Activated T-helper 1 cell treated with anti-CD3 and anti-CD28 coated beads, Interleukin-12 subunit alpha, Interleukin-12 subunit beta, Interleukin-2, Interleukin-4 antibody, amounts not matched to agents 30 ng/mL and 10 ng/mL and 1 ng/mL, durations not matched to agents 14 hours and 24 hours and 36 hours (primary cell): ENCODE measurements at regions of chr11 and their contacts with region 1.

Region 1: DNA sequence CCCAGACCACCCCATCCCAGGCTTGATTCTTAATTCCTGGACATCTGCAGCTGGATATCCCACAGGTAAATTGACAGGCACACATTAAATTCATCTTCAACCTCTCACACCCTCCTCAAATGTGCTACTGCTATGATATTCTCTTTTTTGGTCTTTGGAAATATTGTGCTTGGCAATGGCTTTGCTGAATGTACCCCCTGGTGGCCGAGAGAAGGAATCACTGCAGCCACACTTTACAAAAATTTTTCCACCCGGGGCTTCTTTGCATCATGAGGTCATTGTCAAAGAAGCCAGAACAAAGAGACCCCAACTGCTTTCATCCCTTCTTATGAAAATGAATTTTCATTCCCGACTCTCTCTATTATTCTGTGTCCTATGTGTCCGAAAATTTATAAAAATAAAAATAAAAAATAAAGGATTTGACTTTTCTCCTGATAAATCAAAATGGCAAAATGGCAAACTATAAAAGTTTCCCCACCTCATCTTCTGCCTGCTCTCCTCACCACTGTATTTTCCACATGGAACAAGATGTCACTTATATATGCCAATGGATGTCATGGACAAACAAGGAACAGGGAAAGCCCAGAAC is 15.0 kb upstream of the CYB5R2 start:
- DNase-seq: no peak
- H3K4me3 Mint-ChIP-seq: no peak overlapping the region
- H3K27ac Mint-ChIP-seq: no peak overlapping the region
- H3K4me1 Mint-ChIP-seq: no peaks in the 10 kb centered on the region
- H3K27me3 Mint-ChIP-seq: peaks cover 23% of the 10 kb centered on the region

Region 2: DNA sequence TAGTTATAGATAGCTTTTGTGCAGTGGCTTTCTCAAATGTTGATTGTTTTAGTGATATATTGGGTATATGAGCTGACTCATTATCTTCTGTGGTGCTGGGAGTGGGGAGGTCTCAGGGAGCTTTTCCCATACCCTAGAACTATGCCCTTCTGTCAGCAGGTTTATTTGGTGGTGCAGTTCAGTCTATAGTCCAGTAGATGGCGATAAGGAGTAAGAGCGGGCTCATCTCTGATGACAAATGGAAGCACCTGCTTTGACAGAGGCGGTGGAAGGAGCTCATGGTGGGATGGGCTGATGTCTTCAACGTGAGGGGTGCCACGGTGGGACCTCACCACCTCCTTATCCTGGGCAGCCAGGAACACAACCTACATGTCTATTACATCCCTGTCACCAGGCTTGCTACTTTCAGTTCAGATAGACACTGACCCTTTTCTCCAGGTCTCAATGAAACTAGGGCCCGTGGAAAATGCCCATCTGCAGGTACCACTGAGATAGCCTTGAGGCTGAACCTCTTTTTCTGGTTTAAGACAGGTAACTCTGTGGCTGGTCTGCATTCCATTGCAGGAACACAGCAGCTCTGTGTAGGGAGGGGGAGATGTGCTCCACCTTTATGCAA is 875.8 kb before region 1 on chr11:
- intact Hi-C with region 1: loop called (anchors 5 kb)
- DNase-seq: peak; percentile 15
- H3K4me3 Mint-ChIP-seq: no peak overlapping the region
- H3K27ac Mint-ChIP-seq: no peak overlapping the region
- H3K4me1 Mint-ChIP-seq: no peaks in the 10 kb centered on the region
- H3K27me3 Mint-ChIP-seq: peaks cover 19% of the 10 kb centered on the region

Region 3: DNA sequence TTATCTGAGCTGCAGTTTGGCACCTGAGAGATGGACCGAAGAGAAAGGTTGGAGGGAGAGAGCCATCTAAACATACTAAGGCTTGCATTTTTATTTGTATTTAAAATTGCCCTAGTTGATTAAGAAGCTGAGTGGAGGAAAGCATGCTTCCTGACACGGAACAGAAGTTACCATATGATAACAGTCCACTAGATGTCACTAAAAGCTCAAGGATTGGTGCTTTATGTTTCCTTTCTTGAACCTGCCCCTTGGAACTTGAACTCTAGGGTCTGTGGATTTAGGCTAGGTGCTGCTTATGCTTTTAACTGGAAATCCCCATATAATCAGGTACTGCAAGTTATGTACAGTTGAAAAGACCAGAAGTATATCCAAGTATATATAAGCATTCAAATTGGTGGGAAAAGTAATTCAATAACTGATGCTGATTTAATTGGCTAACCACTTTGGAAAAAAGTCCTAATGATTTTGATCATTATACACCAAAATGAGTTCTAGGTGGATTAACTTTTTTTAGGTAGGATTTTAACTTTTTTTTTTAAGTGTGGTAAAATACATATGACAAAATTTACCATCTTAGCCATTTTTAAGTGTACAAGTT is 590.0 kb before region 1 on chr11:
- intact Hi-C with region 1: loop called (anchors 1 kb)
- DNase-seq: no peak
- H3K4me3 Mint-ChIP-seq: no peak overlapping the region
- H3K27ac Mint-ChIP-seq: no peak overlapping the region
- H3K4me1 Mint-ChIP-seq: no peaks in the 10 kb centered on the region
- H3K27me3 Mint-ChIP-seq: peaks cover 16% of the 10 kb centered on the region

Region 4: GRCh38 chr11:7353100-7353499 is 335.2 kb before region 1 on chr11:
- intact Hi-C with region 1: loop called (anchors 10 kb)
- DNase-seq: no peak
- H3K4me3 Mint-ChIP-seq: no peak overlapping the region
- H3K27ac Mint-ChIP-seq: no peak overlapping the region
- H3K4me1 Mint-ChIP-seq: no peaks in the 10 kb centered on the region
- H3K27me3 Mint-ChIP-seq: no peaks in the 10 kb centered on the region

Region 5: DNA sequence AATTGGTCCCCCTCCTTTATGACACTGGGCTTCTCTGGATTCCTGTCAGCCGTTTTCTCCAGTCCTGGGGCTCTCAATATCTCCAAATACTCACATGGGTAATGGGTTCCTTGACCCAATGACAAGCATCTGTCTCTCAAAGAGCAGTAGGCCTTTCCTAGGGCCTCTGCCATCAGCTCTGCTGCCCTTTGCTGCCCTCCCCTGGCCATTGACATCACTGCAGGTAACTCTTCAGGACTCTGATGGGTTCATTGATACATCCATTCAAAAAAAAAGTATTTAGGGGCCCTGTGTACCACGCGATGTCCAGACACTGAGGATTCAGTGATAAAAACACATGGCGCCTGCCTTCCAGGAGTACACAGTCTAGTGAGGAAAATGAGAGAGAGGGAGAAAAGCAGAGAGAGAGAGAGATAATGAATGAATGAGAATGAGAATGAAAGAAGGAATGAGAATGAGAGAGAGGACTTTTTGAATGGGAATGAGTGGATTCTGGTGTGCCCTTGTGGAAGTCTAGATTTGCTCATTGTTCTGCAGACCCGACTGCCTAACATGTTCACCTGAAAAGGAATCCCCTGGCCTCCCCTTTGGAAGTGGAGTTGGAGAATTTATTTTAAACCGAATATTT is 245.6 kb before region 1 on chr11:
- intact Hi-C with region 1: loop called (anchors 10 kb)
- DNase-seq: peak; percentile 40
- H3K4me3 Mint-ChIP-seq: no peak overlapping the region
- H3K27ac Mint-ChIP-seq: no peak overlapping the region
- H3K4me1 Mint-ChIP-seq: no peaks in the 10 kb centered on the region
- H3K27me3 Mint-ChIP-seq: no peaks in the 10 kb centered on the region

Region 6: DNA sequence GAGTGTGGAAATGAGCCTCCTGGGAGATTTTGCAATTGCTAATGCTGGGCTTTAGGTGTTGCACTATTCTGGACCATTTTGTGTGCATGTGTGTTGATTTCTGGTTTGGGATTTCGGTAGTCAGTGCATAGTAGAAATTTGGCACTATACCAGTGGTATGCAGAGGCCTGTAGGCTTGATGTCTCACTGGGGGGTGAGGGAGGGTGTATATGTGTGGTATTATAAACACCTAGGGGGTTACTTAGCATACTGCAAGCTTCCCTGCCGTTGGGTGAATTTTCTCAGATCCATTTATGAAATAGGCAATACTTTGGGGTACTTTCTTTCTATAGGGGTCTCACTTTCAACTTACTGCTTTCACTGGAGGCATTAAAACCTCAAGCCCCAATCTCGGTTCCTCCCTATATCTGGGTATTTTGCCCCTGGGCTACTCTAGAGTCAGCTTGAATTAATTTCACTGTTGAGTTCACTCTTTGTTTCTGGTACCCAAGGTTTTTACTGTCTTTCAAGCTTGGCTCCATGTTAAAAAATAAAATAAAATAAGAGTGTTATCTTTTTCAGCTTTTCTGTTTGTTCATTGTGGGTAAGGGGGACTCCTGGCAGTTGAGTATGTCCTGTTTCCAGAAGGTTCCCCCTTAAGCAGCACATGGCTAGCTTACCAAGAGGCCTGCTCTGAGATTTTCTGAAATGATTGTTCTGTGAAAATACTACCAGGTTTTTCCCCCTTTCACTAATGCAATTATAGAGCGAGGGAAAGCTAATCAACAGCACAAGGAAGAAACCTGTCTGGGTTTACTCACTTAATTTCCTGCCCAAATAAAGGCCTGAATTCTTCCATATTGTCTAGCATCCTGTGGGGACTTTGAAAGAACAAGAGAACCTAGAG is 128.7 kb before region 1 on chr11:
- intact Hi-C with region 1: no loop called
- DNase-seq: no peak
- H3K4me3 Mint-ChIP-seq: no peak overlapping the region
- H3K27ac Mint-ChIP-seq: no peak overlapping the region
- H3K4me1 Mint-ChIP-seq: no peaks in the 10 kb centered on the region
- H3K27me3 Mint-ChIP-seq: peaks cover 4% of the 10 kb centered on the region

Region 7: GRCh38 chr11:7577291-7578190 is 110.8 kb before region 1 on chr11:
- intact Hi-C with region 1: loop called (anchors 5 kb)
- DNase-seq: no peak
- H3K4me3 Mint-ChIP-seq: peak overlapping the region; percentile 22
- H3K27ac Mint-ChIP-seq: peak overlapping the region; percentile 31
- H3K4me1 Mint-ChIP-seq: peaks cover 22% of the 10 kb centered on the region
- H3K27me3 Mint-ChIP-seq: peaks cover 23% of the 10 kb centered on the region

Region 8: GRCh38 chr11:7986768-7987559 is 298.6 kb after region 1 on chr11 and contains the start of gene EIF3F:
- intact Hi-C with region 1: loop called (anchors 5 kb)
- DNase-seq: peak; percentile 91
- H3K4me3 Mint-ChIP-seq: peak within 1 kb of the TSS; percentile 99
- H3K27ac Mint-ChIP-seq: peak within 1 kb of the TSS; percentile 93
- H3K4me1 Mint-ChIP-seq: peaks cover 39% of the 10 kb centered on the region
- H3K27me3 Mint-ChIP-seq: peaks cover 2% of the 10 kb centered on the region
- total RNA-seq, gene EIF3F: 210 and 214 TPM in 2 replicates